CD4-positive, alpha-beta memory T cell (primary cell): ENCODE measurements at regions of chr3 and their contacts with region 1.

Region 1: DNA sequence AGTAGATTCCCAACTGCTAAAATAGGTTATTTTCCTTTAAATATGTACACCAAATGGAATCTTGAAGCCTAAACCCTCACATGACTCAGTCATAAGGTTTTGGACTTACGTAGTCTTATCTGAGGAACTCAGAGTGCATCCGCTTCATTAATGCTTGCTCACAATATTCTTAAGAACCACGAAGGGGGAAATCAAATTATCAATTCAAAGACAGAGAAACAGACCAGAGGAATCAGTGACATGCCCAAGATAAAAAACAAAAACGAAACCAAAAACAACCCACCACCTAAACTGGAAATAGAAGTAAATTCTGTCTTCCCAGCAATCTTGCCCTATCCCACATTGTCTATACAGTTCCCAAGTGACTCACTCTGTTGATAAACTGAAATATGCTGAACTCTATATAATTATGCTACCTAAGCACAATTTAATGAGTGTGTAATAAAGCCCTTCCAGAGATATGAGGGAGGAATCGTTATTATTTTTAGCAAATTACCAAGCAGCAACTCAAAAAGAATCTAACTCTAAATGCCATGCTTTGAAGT is 135.4 kb upstream of the CBLB start:
- DNase-seq: peak in 1 of 5 donors; percentile 10
- H3K4me3 ChIP-seq: peak overlapping the region in 1 of 2 donors; percentile 7
- H3K4me3 Mint-ChIP-seq: peak overlapping the region; percentile 53 to 87 (median 76)
- H3K27ac ChIP-seq: no peak overlapping the region
- H3K27ac Mint-ChIP-seq: peak overlapping the region in 5 of 7 donors; percentile 0 to 70 (median 34)
- H3K4me1 ChIP-seq: peaks cover 7% of the 10 kb centered on the region
- H3K4me1 Mint-ChIP-seq: peaks cover 7 to 19% (median 9%) of the 10 kb centered on the region in 4 donors
- H3K27me3 ChIP-seq: no peaks in the 10 kb centered on the region
- H3K27me3 Mint-ChIP-seq: no peaks in the 10 kb centered on the region

Region 2: DNA sequence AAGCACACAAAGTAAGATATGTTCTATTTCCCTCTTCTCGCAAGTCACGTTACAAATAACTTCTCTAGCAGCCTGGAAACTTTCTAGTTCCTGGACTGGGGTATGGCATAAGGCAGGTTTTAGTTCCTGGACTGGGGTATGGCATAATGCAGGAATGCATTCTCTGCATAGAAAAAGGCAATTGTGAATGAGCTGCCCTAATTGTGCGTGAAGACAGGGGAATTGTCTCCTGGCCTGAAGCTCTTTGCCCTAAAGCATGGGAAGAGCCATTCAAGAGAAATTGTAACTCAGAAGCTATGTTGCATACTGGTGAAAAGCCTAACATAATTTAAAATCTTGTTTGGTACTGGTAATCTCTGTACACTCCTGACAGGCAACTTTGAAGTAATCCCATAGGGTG is 81.1 kb before region 1 on chr3:
- CTCF ChIA-PET with region 1: no interaction called
- POLR2A ChIA-PET with region 1: no interaction called
- intact Hi-C with region 1: no loop called
- DNase-seq: no peak
- H3K4me3 ChIP-seq: no peak overlapping the region
- H3K4me3 Mint-ChIP-seq: no peak overlapping the region
- H3K27ac ChIP-seq: no peak overlapping the region
- H3K27ac Mint-ChIP-seq: no peak overlapping the region
- H3K4me1 ChIP-seq: no peaks in the 10 kb centered on the region
- H3K4me1 Mint-ChIP-seq: peaks cover 5 to 15% (median 12%) of the 10 kb centered on the region in 4 donors
- H3K27me3 ChIP-seq: no peaks in the 10 kb centered on the region
- H3K27me3 Mint-ChIP-seq: no peaks in the 10 kb centered on the region

Region 3: GRCh38 chr3:106025151-106025722 is 21.0 kb after region 1 on chr3:
- CTCF ChIA-PET with region 1: no interaction called
- POLR2A ChIA-PET with region 1: no interaction called
- intact Hi-C with region 1: loop called (anchors 2 kb)
- DNase-seq: no peak
- H3K4me3 ChIP-seq: no peak overlapping the region
- H3K4me3 Mint-ChIP-seq: no peak overlapping the region
- H3K27ac ChIP-seq: no peak overlapping the region
- H3K27ac Mint-ChIP-seq: peak overlapping the region in 2 of 7 donors; percentile 24 to 78
- H3K4me1 ChIP-seq: peaks cover 3% of the 10 kb centered on the region
- H3K4me1 Mint-ChIP-seq: peaks cover 0 to 7% (median under 1%) of the 10 kb centered on the region in 4 donors
- H3K27me3 ChIP-seq: no peaks in the 10 kb centered on the region
- H3K27me3 Mint-ChIP-seq: no peaks in the 10 kb centered on the region